WTC11 (cell line): ENCODE measurements at regions of chr4 and their contacts with region 1.

Region 1: DNA sequence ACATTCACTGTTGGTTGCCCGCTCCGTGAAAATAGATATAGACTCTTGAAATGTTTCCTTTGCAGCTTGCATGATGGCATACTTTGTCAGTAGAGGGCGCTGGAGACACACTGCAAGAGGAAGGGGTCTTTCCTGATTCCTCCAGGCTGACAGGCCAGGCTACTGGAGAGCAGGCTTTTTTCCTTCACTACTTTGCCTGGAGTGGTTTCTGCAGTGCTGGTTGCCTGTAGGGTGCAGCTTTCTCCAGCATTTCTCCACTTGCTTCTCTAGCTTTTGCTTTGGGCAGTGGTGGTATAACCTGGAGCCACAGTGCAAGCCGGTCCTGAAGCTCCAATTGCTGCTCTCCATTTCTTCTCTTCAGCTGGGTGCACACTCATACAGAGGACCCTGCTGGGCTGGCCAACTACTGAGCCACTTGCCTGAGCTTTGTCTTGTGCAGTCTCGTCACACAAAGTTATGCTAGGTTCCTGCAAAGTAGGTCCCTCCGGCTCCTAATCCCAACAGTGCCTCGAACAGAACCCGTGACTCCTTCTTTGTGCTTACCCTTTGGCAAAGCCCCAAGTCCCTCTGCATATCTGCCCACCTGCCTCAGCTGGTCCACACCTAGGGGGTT is 46.3 kb downstream of the RASSF6 start:
- DNase-seq: peak; percentile 82
- ATAC-seq: peak; percentile 100
- H3K4me3 Mint-ChIP-seq: no peak overlapping the region
- H3K27ac Mint-ChIP-seq: no peak overlapping the region
- H3K4me1 Mint-ChIP-seq: peaks cover 10% of the 10 kb centered on the region
- H3K27me3 Mint-ChIP-seq: no peaks in the 10 kb centered on the region
- CTCF ChIP-seq: peak; percentile 87

Region 2: GRCh38 chr4:73341454-73341853 is 232.4 kb before region 1 on chr4:
- CTCF ChIA-PET with region 1: interaction called, 36 read pairs
- POLR2A ChIA-PET with region 1: no interaction called
- DNase-seq: peak; percentile 50
- ATAC-seq: peak; percentile 95
- H3K4me3 Mint-ChIP-seq: no peak overlapping the region
- H3K27ac Mint-ChIP-seq: no peak overlapping the region
- H3K4me1 Mint-ChIP-seq: peaks cover 29% of the 10 kb centered on the region
- H3K27me3 Mint-ChIP-seq: no peaks in the 10 kb centered on the region
- CTCF ChIP-seq: peak; percentile 34; the same call in 1 of the 2 replicates

Region 3: DNA sequence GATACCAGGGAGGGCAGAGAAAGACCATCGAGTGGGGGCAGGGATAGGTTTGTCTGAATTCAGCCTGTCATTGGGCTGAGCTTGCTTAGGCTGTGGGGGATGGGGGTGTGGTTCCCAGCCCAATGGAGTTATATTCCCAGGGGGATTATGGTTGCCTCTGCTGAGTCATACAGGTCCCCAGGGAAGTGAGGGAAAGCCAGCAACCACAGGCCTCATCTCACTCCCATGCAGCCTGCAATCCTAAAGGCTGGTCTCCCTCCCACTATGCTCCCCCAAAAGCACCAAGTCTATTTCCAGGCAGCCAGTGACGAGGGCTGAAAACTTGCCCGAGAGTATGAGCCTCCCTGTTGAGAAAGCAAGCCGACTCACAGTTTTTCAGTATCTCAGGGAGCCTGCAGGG is 53.1 kb before region 1 on chr4:
- CTCF ChIA-PET with region 1: interaction called, 18 read pairs
- POLR2A ChIA-PET with region 1: no interaction called
- DNase-seq: peak; percentile 30
- ATAC-seq: peak; percentile 88
- H3K4me3 Mint-ChIP-seq: no peak overlapping the region
- H3K27ac Mint-ChIP-seq: peak overlapping the region; percentile 28; the same call in 1 of the 2 replicates
- H3K4me1 Mint-ChIP-seq: peaks cover 21% of the 10 kb centered on the region
- H3K27me3 Mint-ChIP-seq: no peaks in the 10 kb centered on the region
- CTCF ChIP-seq: no peak

Region 4: DNA sequence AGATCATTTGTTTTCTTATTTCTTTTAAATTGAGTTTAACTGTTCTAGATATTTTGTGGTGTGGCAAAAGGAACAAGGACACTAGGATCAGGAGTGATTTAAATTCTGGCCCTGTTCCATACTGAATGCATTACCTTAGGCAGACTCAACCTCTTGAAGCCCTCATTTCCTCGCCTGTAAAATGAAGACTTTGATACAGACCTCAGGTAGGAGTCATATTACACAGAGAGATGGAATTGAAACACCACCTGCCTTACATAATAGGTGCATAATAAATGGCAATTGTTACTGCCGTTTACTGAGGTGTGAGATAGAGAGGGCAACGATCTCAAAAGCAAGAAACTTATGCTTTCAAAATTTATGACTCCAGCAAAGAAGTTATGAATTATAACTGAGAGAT is 74.6 kb after region 1 on chr4:
- CTCF ChIA-PET with region 1: interaction called, 80 read pairs
- POLR2A ChIA-PET with region 1: interaction called, 6 read pairs
- DNase-seq: no peak
- ATAC-seq: no peak
- H3K4me3 Mint-ChIP-seq: no peak overlapping the region
- H3K27ac Mint-ChIP-seq: no peak overlapping the region
- H3K4me1 Mint-ChIP-seq: peaks cover 7% of the 10 kb centered on the region
- H3K27me3 Mint-ChIP-seq: no peaks in the 10 kb centered on the region
- CTCF ChIP-seq: no peak

Region 5: GRCh38 chr4:73653695-73654106 is 79.8 kb after region 1 on chr4:
- CTCF ChIA-PET with region 1: interaction called, 80 read pairs
- POLR2A ChIA-PET with region 1: interaction called, 6 read pairs
- DNase-seq: no peak
- ATAC-seq: peak; percentile 67
- H3K4me3 Mint-ChIP-seq: no peak overlapping the region
- H3K27ac Mint-ChIP-seq: no peak overlapping the region
- H3K4me1 Mint-ChIP-seq: no peaks in the 10 kb centered on the region
- H3K27me3 Mint-ChIP-seq: no peaks in the 10 kb centered on the region
- CTCF ChIP-seq: peak; percentile 59; the same call in 1 of the 2 replicates

Region 6: GRCh38 chr4:73662709-73663546 is 89.0 kb after region 1 on chr4:
- CTCF ChIA-PET with region 1: interaction called, 14 read pairs
- POLR2A ChIA-PET with region 1: no interaction called
- DNase-seq: no peak
- ATAC-seq: peak; percentile 84
- H3K4me3 Mint-ChIP-seq: no peak overlapping the region
- H3K27ac Mint-ChIP-seq: no peak overlapping the region
- H3K4me1 Mint-ChIP-seq: peaks cover 19% of the 10 kb centered on the region
- H3K27me3 Mint-ChIP-seq: peaks cover 11% of the 10 kb centered on the region; the same call in 1 of the 2 replicates
- CTCF ChIP-seq: no peak

Region 7: DNA sequence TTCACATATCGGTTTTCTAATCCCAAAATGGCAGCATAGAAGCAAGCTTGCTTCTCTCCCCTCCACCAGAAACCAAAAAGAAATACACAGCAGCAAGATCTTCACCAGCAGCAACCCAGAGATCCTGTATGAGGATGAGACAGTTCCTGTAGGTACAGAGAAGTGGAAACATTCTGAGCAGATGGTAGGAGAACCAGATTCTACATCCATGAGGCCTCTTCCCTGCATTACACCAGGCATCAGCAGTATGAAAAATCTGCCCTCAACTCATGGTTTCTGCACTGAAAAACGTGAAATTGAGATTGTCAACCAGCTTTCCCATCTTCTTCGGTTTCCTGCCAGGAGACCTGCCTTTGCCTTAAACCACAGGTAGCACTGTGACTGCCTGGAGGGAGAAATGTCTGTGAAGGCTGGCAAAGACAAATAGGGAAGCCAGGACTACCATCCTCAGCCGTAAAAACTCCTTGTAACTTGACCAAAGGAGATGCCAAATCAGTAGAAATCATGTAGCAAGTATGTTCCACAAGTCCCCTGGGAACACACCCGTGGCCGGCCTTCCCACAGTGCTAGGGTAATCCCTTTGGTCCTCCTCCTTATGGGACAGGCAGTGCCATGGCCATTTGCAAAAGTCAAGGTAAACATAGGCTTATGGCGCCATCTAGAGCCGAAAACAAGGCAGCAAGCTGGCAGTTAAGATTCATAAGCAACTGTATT is 560.0 kb after region 1 on chr4:
- CTCF ChIA-PET with region 1: interaction called, 16 read pairs
- POLR2A ChIA-PET with region 1: no interaction called
- DNase-seq: peak; percentile 80
- ATAC-seq: peak; percentile 99
- H3K4me3 Mint-ChIP-seq: no peak overlapping the region
- H3K27ac Mint-ChIP-seq: no peak overlapping the region
- H3K4me1 Mint-ChIP-seq: peaks cover 6% of the 10 kb centered on the region
- H3K27me3 Mint-ChIP-seq: no peaks in the 10 kb centered on the region; the same call in 1 of the 2 replicates
- CTCF ChIP-seq: peak; percentile 63; the same call in 1 of the 2 replicates